ENCODE measurements at regions of chr7 and their contacts with region 1.

Region 1: GRCh38 chr7:37495574-37496184 is 47.0 kb upstream of the ELMO1 start:
- DNase-seq: no peak
- ATAC-seq: peak; percentile 56
- H3K4me3 Mint-ChIP-seq: no peak overlapping the region
- H3K27ac Mint-ChIP-seq: no peak overlapping the region
- H3K4me1 Mint-ChIP-seq: peaks cover 7% of the 10 kb centered on the region
- H3K27me3 Mint-ChIP-seq: no peaks in the 10 kb centered on the region
- CTCF ChIP-seq: peak; percentile 79

Region 2: GRCh38 chr7:37113661-37114355 is 381.9 kb before region 1 on chr7:
- CTCF ChIA-PET with region 1: no interaction called
- POLR2A ChIA-PET with region 1: no interaction called
- intact Hi-C with region 1: no loop called
- DNase-seq: no peak
- ATAC-seq: no peak
- H3K4me3 Mint-ChIP-seq: no peak overlapping the region
- H3K27ac Mint-ChIP-seq: no peak overlapping the region
- H3K4me1 Mint-ChIP-seq: peaks cover 55% of the 10 kb centered on the region
- H3K27me3 Mint-ChIP-seq: no peaks in the 10 kb centered on the region
- CTCF ChIP-seq: no peak

Region 3: DNA sequence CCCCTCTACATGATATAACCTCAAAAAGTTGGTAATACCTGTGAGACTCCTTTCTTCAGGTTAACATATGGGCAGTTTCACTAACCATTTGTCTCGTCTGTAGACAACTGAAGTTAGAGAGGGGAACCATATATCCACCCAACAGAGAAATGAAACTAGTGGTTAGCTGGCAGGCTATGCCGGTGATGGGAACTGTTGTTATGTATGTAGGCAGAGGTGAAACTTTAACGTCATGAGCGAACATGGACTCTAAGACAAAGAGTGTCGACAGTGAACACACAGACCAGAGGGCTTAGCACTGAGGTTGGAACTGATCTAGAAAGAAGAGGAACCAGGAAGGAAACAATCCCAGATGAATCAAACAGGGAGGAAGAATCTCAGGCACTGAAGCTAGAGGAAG is 159.4 kb before region 1 on chr7:
- CTCF ChIA-PET with region 1: interaction called, 12 read pairs
- POLR2A ChIA-PET with region 1: no interaction called
- intact Hi-C with region 1: no loop called
- DNase-seq: peak; percentile 54
- ATAC-seq: peak; percentile 85
- H3K4me3 Mint-ChIP-seq: peak overlapping the region; percentile 6
- H3K27ac Mint-ChIP-seq: peak overlapping the region; percentile 64
- H3K4me1 Mint-ChIP-seq: peaks cover 72% of the 10 kb centered on the region
- H3K27me3 Mint-ChIP-seq: no peaks in the 10 kb centered on the region
- CTCF ChIP-seq: no peak

Region 4: GRCh38 chr7:37385787-37386186 is 109.9 kb before region 1 on chr7:
- CTCF ChIA-PET with region 1: no interaction called
- POLR2A ChIA-PET with region 1: no interaction called
- intact Hi-C with region 1: no loop called
- DNase-seq: no peak
- ATAC-seq: no peak
- H3K4me3 Mint-ChIP-seq: no peak overlapping the region
- H3K27ac Mint-ChIP-seq: no peak overlapping the region
- H3K4me1 Mint-ChIP-seq: peaks cover 24% of the 10 kb centered on the region
- H3K27me3 Mint-ChIP-seq: no peaks in the 10 kb centered on the region
- CTCF ChIP-seq: no peak

Region 5: GRCh38 chr7:37476881-37477450 is 18.7 kb before region 1 on chr7:
- CTCF ChIA-PET with region 1: interaction called, 27 read pairs
- POLR2A ChIA-PET with region 1: no interaction called
- intact Hi-C with region 1: no loop called
- DNase-seq: no peak
- ATAC-seq: no peak
- H3K4me3 Mint-ChIP-seq: no peak overlapping the region
- H3K27ac Mint-ChIP-seq: no peak overlapping the region
- H3K4me1 Mint-ChIP-seq: no peaks in the 10 kb centered on the region
- H3K27me3 Mint-ChIP-seq: peaks cover 7% of the 10 kb centered on the region
- CTCF ChIP-seq: no peak

Region 6: GRCh38 chr7:37510043-37510634 is 14.5 kb after region 1 on chr7:
- CTCF ChIA-PET with region 1: interaction called, 99 read pairs
- POLR2A ChIA-PET with region 1: interaction called, 3 read pairs
- intact Hi-C with region 1: no loop called
- DNase-seq: peak; percentile 45
- ATAC-seq: peak; percentile 80
- H3K4me3 Mint-ChIP-seq: no peak overlapping the region
- H3K27ac Mint-ChIP-seq: no peak overlapping the region
- H3K4me1 Mint-ChIP-seq: no peaks in the 10 kb centered on the region
- H3K27me3 Mint-ChIP-seq: peaks cover 4% of the 10 kb centered on the region
- CTCF ChIP-seq: peak; percentile 87

Region 7: DNA sequence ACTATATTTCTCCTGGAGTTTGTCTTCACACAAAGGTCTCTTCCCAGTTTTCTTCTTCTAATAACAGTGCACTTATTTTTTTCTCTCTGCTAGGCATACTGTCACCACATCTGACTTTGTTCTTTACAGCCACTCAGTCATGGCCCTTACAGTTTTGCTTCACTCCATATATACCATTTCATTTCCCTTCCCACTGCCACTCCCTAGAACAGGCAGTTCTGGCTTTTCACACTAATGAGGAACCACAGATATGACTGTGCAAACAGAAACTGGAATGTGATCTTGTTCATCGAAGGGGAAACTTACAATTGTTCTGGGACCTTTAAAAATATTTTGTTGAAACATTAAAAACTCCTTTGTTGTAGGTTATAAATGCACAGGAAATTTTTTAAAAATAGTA is 492.1 kb after region 1 on chr7:
- CTCF ChIA-PET with region 1: no interaction called
- POLR2A ChIA-PET with region 1: no interaction called
- intact Hi-C with region 1: no loop called
- DNase-seq: no peak
- ATAC-seq: no peak
- H3K4me3 Mint-ChIP-seq: no peak overlapping the region
- H3K27ac Mint-ChIP-seq: no peak overlapping the region
- H3K4me1 Mint-ChIP-seq: no peaks in the 10 kb centered on the region
- H3K27me3 Mint-ChIP-seq: peaks cover 3% of the 10 kb centered on the region
- CTCF ChIP-seq: no peak